PC-3 (cell line): ENCODE measurements at regions of chr4 and their contacts with region 1.

Region 1: GRCh38 chr4:137819964-137820383 is 287.7 kb upstream of the PCDH18 start:
- DNase-seq: peak; percentile 65
- ATAC-seq: peak; percentile 90
- H3K4me3 ChIP-seq: no peak overlapping the region
- H3K27ac ChIP-seq: no peak overlapping the region
- H3K4me1 ChIP-seq: peaks cover 6% of the 10 kb centered on the region; the same call in 1 of the 2 replicates
- H3K27me3 ChIP-seq: no peaks in the 10 kb centered on the region
- CTCF ChIP-seq: peak; percentile 81

Region 2: GRCh38 chr4:137647375-137647774 is 172.6 kb before region 1 on chr4:
- CTCF ChIA-PET with region 1: no interaction called
- POLR2A ChIA-PET with region 1: interaction called, 14 read pairs
- intact Hi-C with region 1: no loop called
- DNase-seq: peak; percentile 9
- ATAC-seq: no peak
- H3K4me3 ChIP-seq: no peak overlapping the region
- H3K27ac ChIP-seq: peak overlapping the region; percentile 82
- H3K4me1 ChIP-seq: peaks cover 50% of the 10 kb centered on the region
- H3K27me3 ChIP-seq: no peaks in the 10 kb centered on the region
- CTCF ChIP-seq: no peak

Region 3: DNA sequence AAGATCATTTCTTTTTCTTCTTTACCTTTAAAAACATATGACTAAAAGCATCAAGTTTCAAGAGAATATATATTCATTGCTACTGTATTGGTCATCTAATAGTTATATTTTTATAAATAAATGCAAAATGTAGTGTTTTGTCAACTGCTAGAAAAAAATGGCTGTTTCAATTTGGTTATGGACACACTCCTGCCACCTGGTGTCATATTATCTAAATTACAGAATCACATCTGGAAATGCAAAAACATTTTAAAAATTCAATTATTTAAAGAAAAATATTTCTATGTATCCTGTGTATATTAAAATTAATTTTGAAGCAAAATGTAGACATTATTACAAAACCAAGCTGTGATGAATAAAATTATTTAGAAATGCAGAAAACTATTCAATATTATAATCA is 41.7 kb after region 1 on chr4:
- CTCF ChIA-PET with region 1: no interaction called
- POLR2A ChIA-PET with region 1: no interaction called
- intact Hi-C with region 1: loop called (anchors 1 kb)
- DNase-seq: peak; percentile 25
- ATAC-seq: no peak
- H3K4me3 ChIP-seq: no peak overlapping the region
- H3K27ac ChIP-seq: no peak overlapping the region
- H3K4me1 ChIP-seq: no peaks in the 10 kb centered on the region
- H3K27me3 ChIP-seq: no peaks in the 10 kb centered on the region
- CTCF ChIP-seq: peak; percentile 38

Region 4: GRCh38 chr4:137998666-137999429 is 178.9 kb after region 1 on chr4:
- CTCF ChIA-PET with region 1: no interaction called
- POLR2A ChIA-PET with region 1: no interaction called
- intact Hi-C with region 1: loop called (anchors 10 kb)
- DNase-seq: no peak
- ATAC-seq: no peak
- H3K4me3 ChIP-seq: no peak overlapping the region
- H3K27ac ChIP-seq: no peak overlapping the region
- H3K4me1 ChIP-seq: peaks cover 5% of the 10 kb centered on the region
- H3K27me3 ChIP-seq: no peaks in the 10 kb centered on the region
- CTCF ChIP-seq: no peak

Region 5: GRCh38 chr4:138090150-138090917 is 270.4 kb after region 1 on chr4:
- CTCF ChIA-PET with region 1: interaction called, 4 read pairs
- POLR2A ChIA-PET with region 1: no interaction called
- intact Hi-C with region 1: loop called (anchors 1 kb)
- DNase-seq: peak; percentile 85
- ATAC-seq: peak; percentile 88
- H3K4me3 ChIP-seq: peak overlapping the region; percentile 66
- H3K27ac ChIP-seq: no peak overlapping the region
- H3K4me1 ChIP-seq: peaks cover 4% of the 10 kb centered on the region; the same call in 1 of the 2 replicates
- H3K27me3 ChIP-seq: no peaks in the 10 kb centered on the region
- CTCF ChIP-seq: peak; percentile 74

Region 6: DNA sequence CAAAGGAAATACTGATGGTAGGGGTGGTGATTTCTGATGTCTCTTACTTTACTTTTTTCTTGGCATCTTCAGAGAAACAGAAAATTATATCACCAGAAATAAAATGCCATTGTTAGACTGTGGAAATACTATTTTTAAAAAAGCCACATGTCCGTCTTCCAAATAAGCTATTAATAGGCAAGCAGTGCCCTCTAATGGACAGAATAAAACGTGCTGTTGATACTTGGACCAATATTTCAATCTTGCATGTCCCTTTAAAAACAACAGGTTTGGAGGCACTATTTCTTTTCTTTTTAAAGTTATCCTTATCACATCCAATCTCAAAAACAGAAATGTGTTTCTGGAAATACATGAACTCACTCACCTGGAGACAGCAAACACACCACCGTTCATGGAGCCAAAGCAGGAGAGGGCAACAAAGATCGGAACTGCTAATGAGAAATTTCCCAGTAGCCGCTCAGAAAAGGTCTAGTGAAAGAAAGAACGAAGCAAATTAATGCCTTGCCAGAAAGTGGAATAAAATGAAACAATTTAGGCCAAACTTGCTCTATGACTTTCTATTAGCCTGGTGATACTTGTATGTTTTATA is 363.0 kb after region 1 on chr4:
- CTCF ChIA-PET with region 1: no interaction called
- POLR2A ChIA-PET with region 1: no interaction called
- intact Hi-C with region 1: loop called (anchors 10 kb)
- DNase-seq: peak; percentile 67
- ATAC-seq: peak; percentile 15; the same call in 1 of the 2 replicates
- H3K4me3 ChIP-seq: no peak overlapping the region
- H3K27ac ChIP-seq: no peak overlapping the region
- H3K4me1 ChIP-seq: no peaks in the 10 kb centered on the region
- H3K27me3 ChIP-seq: no peaks in the 10 kb centered on the region
- CTCF ChIP-seq: peak; percentile 73